A549 (cell line): ENCODE measurements at regions of chr22 and their contacts with region 1.

Region 1: DNA sequence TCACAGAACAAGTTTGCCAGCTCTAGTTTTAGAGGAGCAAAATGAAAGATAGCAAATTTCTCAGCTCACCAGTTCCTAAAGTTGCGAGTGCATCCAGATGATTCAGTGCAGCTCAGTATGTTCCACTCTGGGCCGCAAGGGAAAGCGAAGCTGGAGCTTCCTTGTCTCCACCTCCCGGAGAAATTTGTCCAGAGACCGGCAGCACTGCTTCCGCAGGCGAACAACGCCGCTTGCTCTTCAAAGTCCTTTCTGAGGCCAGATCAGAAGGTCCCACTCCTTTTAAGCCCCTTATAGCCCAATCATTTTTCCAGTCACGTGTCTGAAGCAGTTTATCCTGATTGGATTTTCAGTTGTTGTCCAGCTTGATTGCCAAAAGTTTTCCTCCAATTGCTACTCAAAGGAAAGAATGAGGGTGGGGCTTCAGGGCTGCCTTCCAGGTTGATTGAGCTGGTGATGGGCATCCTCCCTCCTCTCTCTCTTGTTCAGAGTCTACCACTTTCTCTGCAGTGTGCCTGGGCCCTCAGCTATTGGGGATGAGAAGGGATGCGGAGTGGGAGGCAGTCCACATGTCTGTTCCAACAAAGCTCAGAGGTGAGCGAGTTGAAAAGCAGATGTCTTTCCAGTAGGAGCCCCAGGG is at the start of gene ZNF280A:
- DNase-seq: peak; percentile 67 to 87
- ATAC-seq: peak; percentile 93 to 94
- H3K4me3 ChIP-seq: peak within 1 kb of the TSS; percentile 54
- H3K27ac ChIP-seq: peak within 1 kb of the TSS; percentile 71 to 83
- H3K4me1 ChIP-seq: peaks cover 9% of the 10 kb centered on the region; the same call in 2 of the 3 replicates
- CTCF ChIP-seq: no peak
- EP300 ChIP-seq: no peak
- POLR2A ChIP-seq: peak; percentile 83
- RAD21 ChIP-seq: no peak
- polyA plus RNA-seq, gene ZNF280A: 2.7 and 3.0 TPM in 2 replicates

Region 2: GRCh38 chr22:22498267-22498666 is 21.9 kb before region 1 on chr22:
- CTCF ChIA-PET with region 1: no interaction called
- POLR2A ChIA-PET with region 1: no interaction called
- DNase-seq: no peak
- ATAC-seq: no peak
- H3K4me3 ChIP-seq: no peak overlapping the region
- H3K27ac ChIP-seq: no peak overlapping the region
- H3K4me1 ChIP-seq: no peaks in the 10 kb centered on the region
- CTCF ChIP-seq: no peak
- EP300 ChIP-seq: no peak
- POLR2A ChIP-seq: no peak
- RAD21 ChIP-seq: no peak

Region 3: DNA sequence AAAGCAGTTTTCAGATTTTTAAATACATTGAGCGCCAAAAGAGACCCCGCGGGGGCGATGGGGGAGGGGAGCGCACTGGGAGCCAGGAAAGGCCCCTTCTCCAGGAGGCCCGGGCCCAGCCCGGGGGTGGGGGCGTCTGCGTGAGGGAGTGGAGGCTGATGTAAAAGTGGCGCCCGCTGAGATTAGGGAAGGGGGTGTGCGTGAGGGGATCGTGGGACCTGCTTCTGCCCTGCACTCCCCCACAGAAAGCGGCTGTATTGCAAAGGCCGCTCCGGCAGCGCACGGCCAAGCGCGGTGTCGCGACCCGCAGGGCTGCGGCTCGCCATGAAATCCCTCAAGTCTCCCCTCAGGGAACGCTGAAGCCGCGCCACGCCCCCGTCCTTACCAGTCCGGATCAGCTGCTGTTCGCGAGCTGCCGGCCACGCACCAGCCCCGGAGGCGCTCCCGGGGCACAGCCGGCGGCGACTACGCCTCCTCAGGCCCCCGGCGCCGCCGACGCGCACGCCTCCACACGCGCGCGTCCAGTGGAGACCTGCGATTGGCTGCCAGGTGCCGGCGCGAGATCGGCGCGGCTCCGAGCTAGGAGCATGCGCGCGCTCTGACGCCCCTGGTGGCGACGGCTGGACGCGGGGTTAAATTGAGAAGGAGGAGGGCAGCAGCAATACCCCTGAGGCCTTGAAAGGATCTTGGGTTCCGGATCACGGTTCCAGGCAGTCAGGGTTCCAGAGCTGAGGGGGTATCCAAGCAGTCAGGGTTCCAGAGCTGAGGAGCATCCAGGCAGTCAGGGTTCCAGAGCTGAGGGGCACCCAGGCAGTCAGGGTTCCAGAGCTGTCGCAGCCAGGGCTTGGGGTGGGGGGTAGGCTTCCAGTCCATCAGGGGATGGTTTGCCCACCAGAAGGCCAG is 11.6 kb before region 1 on chr22 and contains the start of gene ZNF280B:
- CTCF ChIA-PET with region 1: interaction called, 17 read pairs
- POLR2A ChIA-PET with region 1: interaction called, 19 read pairs
- DNase-seq: peak; percentile 44 to 85
- ATAC-seq: peak; percentile 99 to 100
- H3K4me3 ChIP-seq: peak within 1 kb of the TSS; percentile 87
- H3K27ac ChIP-seq: peak within 1 kb of the TSS; percentile 77 to 91
- H3K4me1 ChIP-seq: no peaks in the 10 kb centered on the region
- CTCF ChIP-seq: peak; percentile 48
- EP300 ChIP-seq: no peak
- POLR2A ChIP-seq: peak; percentile 59
- RAD21 ChIP-seq: no peak
- polyA plus RNA-seq, gene ZNF280B: 3.9 and 5.1 TPM in 2 replicates

Region 4: DNA sequence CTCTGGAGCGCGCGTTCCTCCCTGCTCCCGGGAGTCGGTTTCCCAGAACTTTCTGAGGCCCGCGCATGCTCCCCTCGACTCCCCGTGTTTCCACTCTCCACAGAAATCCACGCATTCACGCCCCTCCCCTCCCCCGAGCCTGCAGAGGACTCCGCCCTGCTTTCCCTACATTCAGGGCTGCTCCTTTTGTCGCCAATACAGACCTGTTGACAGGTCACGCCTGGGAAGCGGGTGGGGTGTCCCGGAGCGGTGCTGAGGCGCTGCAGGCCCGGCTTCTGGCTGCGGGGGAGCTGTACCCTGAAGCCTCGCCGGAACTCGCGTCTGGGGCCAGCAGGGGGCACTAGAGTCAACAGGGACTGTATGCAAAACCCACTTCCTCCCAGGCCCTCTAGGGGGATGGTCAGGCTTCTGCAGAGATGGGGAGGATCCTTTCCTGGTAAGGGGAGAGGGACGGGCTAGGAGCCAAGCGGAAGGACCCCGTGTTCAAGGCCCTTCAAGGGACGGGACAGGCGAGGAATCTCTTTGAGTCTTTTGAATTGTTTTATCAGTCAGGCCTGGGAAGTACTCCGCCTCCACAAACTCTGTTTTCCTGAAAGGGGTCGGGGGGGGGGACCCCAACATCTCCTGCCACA is 39.0 kb after region 1 on chr22 and contains the start of gene PRAME:
- CTCF ChIA-PET with region 1: interaction called, 15 read pairs
- POLR2A ChIA-PET with region 1: interaction called, 15 read pairs
- DNase-seq: peak; percentile 71 to 93
- ATAC-seq: peak; percentile 95 to 98
- H3K4me3 ChIP-seq: peak within 1 kb of the TSS; percentile 90
- H3K27ac ChIP-seq: peak within 1 kb of the TSS; percentile 96 to 99
- H3K4me1 ChIP-seq: peaks cover 36% of the 10 kb centered on the region; the same call in 2 of the 3 replicates
- CTCF ChIP-seq: peak; percentile 76
- EP300 ChIP-seq: no peak
- POLR2A ChIP-seq: peak; percentile 15; the same call in 1 of the 2 replicates
- RAD21 ChIP-seq: peak; percentile 44 to 59
- polyA plus RNA-seq, gene PRAME: 173 and 228 TPM in 2 replicates